Activated naive CD8-positive, alpha-beta T cell treated with anti-CD3 and anti-CD28 coated beads, Interleukin-2, amount 10 ng/mL, durations not matched to agents 7 days and 5 days (primary cell): ENCODE measurements at regions of chr17 and their contacts with region 1.

Region 1: GRCh38 chr17:7834962-7835813 is 1.2 kb downstream of the KDM6B start:
- DNase-seq: peak; percentile 82
- ATAC-seq: peak; percentile 49
- H3K4me3 Mint-ChIP-seq: peak overlapping the region; percentile 94
- H3K27ac Mint-ChIP-seq: peak overlapping the region; percentile 93
- H3K4me1 Mint-ChIP-seq: peaks cover 37% of the 10 kb centered on the region
- H3K27me3 Mint-ChIP-seq: peaks cover 20% of the 10 kb centered on the region

Region 2: DNA sequence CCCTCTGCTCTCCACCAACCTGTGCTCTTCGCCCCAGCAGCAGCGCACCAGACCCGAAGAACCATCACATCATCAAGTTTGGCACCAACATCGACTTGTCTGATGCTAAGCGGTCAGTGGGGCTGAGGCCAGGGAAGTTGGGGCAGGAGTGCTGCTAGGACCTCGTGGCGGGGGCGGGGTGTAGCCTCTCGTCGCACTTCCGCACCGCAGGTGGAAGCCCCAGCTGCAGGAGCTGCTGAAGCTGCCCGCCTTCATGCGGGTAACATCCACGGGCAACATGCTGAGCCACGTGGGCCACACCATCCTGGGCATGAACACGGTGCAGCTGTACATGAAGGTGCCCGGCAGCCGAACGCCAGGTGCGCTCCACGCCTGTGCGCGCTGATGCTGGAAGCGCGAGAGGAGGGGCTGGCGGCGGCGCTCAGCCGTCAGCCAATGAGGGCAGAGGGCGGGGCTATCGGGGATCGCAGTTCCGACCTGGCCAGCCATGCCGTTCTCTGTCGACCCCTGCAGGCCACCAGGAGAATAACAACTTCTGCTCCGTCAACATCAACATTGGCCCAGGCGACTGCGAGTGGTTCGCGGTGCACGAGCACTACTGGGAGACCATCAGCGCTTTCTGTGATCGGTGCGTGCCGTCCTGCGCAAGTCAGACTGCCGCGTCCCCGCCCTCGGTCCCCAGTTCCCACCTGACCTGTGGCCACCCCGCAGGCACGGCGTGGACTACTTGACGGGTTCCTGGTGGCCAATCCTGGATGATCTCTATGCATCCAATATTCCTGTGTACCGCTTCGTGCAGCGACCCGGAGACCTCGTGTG is 16.5 kb after region 1 on chr17:
- POLR2A ChIA-PET with region 1: interaction called, 21 read pairs
- DNase-seq: peak; percentile 96
- ATAC-seq: peak; percentile 92
- H3K4me3 Mint-ChIP-seq: peak overlapping the region; percentile 81
- H3K27ac Mint-ChIP-seq: peak overlapping the region; percentile 45
- H3K4me1 Mint-ChIP-seq: peaks cover 18% of the 10 kb centered on the region
- H3K27me3 Mint-ChIP-seq: no peaks in the 10 kb centered on the region

Region 3: DNA sequence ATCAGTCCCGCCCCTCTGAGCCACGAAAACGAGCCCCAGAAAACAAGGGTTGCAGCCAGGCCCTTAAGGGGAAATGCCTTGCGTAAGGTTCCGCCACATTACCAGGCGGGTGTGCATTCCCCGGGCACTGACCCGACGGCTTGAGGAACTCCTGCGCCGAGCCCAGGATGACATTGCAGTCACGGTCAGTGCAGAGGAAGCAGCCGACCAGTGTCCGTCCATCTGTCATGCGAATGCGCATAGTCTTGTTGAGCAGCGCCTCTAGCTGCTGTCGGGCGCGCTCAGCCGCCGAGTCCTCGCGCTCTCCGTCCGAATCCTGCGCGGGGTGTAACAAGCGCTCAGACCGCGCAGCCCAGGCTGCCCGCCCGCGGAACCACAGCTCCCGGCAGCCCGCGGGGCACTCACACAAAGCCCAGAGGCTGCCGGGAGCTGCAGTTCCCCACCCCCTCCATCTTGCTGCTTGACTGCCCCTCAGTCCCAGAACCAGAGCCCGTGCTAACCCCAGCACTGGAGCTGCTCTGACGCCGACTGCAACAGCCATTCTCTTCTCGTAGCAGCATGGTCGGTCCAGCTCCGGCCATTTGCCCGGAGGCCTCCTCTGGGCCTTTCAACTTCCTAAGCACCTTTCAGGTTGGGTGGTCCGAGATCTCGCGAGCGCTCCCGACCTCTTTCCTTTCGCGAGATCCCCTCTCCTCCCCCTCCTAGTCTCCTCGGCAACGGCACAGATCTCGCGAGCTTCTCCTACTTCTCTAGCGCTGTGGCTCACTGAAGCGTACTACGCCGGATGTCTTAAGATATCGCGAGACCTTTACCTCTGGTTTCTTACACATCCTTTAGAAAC is 21.9 kb after region 1 on chr17 and contains the start of gene NAA38:
- POLR2A ChIA-PET with region 1: interaction called, 21 read pairs
- DNase-seq: peak; percentile 94
- ATAC-seq: peak; percentile 87
- H3K4me3 Mint-ChIP-seq: no peak within 1 kb of the TSS
- H3K27ac Mint-ChIP-seq: no peak within 1 kb of the TSS
- H3K4me1 Mint-ChIP-seq: peaks cover 25% of the 10 kb centered on the region
- H3K27me3 Mint-ChIP-seq: no peaks in the 10 kb centered on the region
- total RNA-seq, gene NAA38: 62.1 to 71.7 TPM